HEK293 (cell line): ENCODE measurements at regions of chr6 and their contacts with region 1.

Region 1: GRCh38 chr6:31441365-31442267 is 38.2 kb downstream of the MICA start:
- H3K4me3 ChIP-seq: no peak overlapping the region
- H3K27ac ChIP-seq: no peak overlapping the region
- H3K4me1 ChIP-seq: no peaks in the 10 kb centered on the region
- CTCF ChIP-seq: peak; percentile 69; the same call in 1 of the 2 replicates

Region 2: GRCh38 chr6:31403283-31403989 is 38.2 kb before region 1 on chr6 and contains the start of gene MICA:
- CTCF ChIA-PET with region 1: interaction called, 98 read pairs
- POLR2A ChIA-PET with region 1: interaction called, 6 read pairs
- H3K4me3 ChIP-seq: peak within 1 kb of the TSS; percentile 84
- H3K27ac ChIP-seq: peak within 1 kb of the TSS; percentile 63; the same call in 1 of the 2 replicates
- H3K4me1 ChIP-seq: peaks cover 5% of the 10 kb centered on the region; the same call in 1 of the 2 replicates
- CTCF ChIP-seq: peak; percentile 84

Region 3: GRCh38 chr6:31426395-31427354 is 14.9 kb before region 1 on chr6:
- CTCF ChIA-PET with region 1: interaction called, 13 read pairs
- POLR2A ChIA-PET with region 1: no interaction called
- H3K4me3 ChIP-seq: no peak overlapping the region
- H3K27ac ChIP-seq: no peak overlapping the region
- H3K4me1 ChIP-seq: no peaks in the 10 kb centered on the region
- CTCF ChIP-seq: no peak

Region 4: GRCh38 chr6:31462964-31463870 is 21.6 kb after region 1 on chr6:
- CTCF ChIA-PET with region 1: interaction called, 11 read pairs
- POLR2A ChIA-PET with region 1: interaction called, 4 read pairs
- H3K4me3 ChIP-seq: peak overlapping the region; percentile 37
- H3K27ac ChIP-seq: no peak overlapping the region
- H3K4me1 ChIP-seq: no peaks in the 10 kb centered on the region
- CTCF ChIP-seq: no peak

Region 5: DNA sequence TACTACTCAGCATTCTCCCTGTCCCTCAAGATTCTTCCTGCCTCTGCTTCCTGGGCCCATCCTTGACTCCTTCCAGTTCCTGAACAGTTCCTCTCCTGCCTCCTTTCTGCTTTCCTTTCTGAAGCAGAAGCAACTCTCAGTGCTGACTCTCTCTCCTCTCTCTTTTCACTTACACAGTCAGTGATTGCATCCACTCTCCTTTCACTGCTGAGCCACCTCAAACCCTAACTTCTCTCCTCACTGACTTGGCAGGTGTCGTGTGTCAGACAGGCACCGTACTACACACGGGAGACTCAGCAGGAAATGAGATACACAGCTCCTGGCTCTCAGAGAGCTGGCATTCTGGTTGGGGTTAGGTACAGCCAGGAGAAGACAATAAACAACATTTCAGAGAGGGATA is 255.9 kb after region 1 on chr6:
- CTCF ChIA-PET with region 1: no interaction called
- POLR2A ChIA-PET with region 1: no interaction called
- H3K4me3 ChIP-seq: no peak overlapping the region
- H3K27ac ChIP-seq: no peak overlapping the region
- H3K4me1 ChIP-seq: no peaks in the 10 kb centered on the region
- CTCF ChIP-seq: no peak

Region 6: GRCh38 chr6:31862344-31863227 is 421.0 kb after region 1 on chr6 and contains the start of gene NEU1:
- CTCF ChIA-PET with region 1: no interaction called
- POLR2A ChIA-PET with region 1: no interaction called
- H3K4me3 ChIP-seq: peak within 1 kb of the TSS; percentile 82
- H3K27ac ChIP-seq: peak within 1 kb of the TSS; percentile 27
- H3K4me1 ChIP-seq: no peaks in the 10 kb centered on the region
- CTCF ChIP-seq: no peak